Adrenal gland (tissue), 19 donors: ENCODE measurements at regions of chr10 and their contacts with region 1.

Region 1: DNA sequence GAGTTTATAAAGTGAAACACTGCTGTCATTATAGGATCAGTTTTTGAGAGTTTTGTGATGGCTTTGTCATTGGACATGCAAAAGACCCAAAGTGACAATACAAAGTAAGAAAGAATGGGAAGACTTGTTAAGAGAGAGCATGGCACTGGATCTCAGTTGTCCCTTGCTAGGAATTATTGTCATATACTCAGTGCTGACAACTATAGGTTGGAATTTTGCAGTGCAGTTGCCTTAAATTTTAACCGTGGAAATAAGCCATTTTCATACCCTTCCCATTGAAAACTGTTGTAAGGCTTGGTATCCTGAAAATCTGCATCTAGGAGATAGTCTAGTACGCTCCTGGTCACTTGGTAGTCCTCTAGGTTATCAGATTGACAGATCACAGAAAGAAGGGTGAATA is 1156.7 kb downstream of the GATA3 start:
- DNase-seq: no peak
- H3K4me3 ChIP-seq: no peak overlapping the region
- H3K27ac ChIP-seq: no peak overlapping the region
- H3K4me1 ChIP-seq: no peaks in the 10 kb centered on the region
- H3K27me3 ChIP-seq: peaks cover 3% of the 10 kb centered on the region
- CTCF ChIP-seq: no peak
- POLR2A ChIP-seq: no peak

Region 2: GRCh38 chr10:7866176-7866575 is 1345.1 kb before region 1 on chr10:
- intact Hi-C with region 1: loop called in 1 of 2 experiments (anchors 10 kb)
- DNase-seq: no peak
- H3K4me3 ChIP-seq: no peak overlapping the region
- H3K27ac ChIP-seq: no peak overlapping the region
- H3K4me1 ChIP-seq: no peaks in the 10 kb centered on the region
- H3K27me3 ChIP-seq: no peaks in the 10 kb centered on the region
- CTCF ChIP-seq: no peak
- POLR2A ChIP-seq: no peak